Cardiac septum (tissue), 1 donor: ENCODE measurements at regions of chr20 and their contacts with region 1.

Region 1: GRCh38 chr20:49219089-49219923 is at the start of gene DDX27:
- DNase-seq: peak; percentile 99
- total RNA-seq, gene DDX27: 14.0 TPM

Region 2: DNA sequence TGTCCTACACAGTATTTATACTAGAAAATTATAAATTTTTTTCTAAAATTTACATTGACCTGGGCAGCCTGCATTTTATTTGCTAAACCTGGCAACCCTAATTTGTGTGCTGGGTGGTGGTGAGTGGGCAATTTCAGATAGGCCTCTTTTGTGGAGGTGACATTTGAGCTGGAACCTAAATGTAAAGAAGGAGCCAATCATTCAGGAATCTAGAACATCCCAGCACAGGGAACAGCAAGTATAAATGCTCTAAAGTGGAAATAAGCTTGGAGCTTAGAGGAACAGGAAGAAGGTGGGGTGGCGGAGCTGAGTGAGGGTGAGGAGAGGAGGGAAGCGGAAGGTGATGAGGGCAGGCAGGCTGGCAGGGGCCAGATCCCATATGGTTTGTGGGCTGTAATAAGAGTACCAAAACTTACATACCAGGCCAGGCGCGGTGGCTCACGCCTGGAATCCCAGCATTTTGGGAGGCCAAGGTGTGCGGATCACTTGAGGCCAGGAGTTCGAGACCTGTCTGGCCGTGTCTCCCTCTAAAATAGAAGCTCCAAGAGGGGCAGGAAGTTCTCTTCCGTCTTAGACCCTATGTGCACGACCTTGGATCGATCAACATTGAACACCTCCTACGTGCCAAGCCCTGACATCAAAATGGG is 173.7 kb before region 1 on chr20:
- intact Hi-C with region 1: no loop called
- DNase-seq: peak; percentile 85

Region 3: DNA sequence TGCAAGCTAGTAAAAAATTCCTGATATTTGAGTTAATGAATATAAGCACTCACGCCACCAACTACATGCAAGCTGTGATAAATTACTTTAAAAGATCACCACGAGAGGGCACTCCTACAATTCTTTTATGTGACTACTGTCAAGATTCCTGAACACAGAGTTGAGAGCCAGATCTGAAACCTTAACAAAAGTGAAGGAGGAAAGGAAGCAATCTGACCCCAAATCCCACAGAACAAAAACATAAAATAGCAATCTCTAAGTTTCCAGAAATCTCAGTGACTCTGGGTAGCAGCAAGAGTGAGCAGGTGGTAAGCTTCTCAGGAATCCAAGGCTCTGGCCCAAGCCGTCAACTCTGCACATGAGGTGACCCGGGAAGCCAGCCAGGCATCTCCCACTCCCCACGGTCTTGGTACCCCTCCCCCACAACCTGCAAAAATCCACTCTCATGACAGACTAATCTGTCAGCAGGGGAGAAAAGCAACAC is 86.3 kb before region 1 on chr20:
- intact Hi-C with region 1: loop called (anchors 2 kb)
- DNase-seq: no peak

Region 4: DNA sequence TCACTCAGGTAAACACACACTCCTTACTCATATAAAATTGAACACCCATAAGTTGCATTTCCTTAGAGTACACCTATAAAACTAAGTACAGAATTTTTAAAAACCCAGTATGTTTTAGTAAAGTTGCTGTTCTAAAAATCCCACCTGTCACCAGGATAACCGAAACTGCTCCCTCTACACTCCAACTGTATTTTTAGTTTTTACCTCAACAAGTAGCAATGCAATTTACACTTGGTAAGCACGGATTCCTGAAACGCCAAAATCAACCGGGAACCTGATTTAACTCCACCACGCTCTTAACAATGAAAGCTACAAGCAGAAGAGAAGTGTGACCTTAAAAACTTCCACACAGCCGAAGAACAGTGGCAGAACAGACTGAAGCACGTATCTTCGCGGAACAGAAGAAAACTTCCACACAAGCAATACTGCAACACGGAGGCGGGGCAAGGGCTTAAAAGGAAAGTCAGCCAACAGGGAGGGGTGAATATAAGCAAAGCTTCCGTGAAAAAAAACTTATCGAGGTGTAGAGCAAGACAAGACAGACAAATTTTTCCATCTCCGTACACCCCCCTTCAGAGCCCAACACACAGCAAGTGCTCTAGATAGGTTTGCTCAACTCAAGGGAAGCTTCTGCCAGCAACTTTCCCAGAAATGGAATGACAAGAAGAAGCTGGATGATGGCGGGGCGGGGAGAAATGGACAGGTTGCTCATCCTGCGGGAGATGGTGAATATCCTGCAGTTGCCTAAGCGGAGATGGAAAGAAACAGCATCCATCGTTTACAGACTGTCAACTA is 32.6 kb before region 1 on chr20:
- intact Hi-C with region 1: loop called (anchors 1 kb)
- DNase-seq: peak; percentile 84

Region 5: DNA sequence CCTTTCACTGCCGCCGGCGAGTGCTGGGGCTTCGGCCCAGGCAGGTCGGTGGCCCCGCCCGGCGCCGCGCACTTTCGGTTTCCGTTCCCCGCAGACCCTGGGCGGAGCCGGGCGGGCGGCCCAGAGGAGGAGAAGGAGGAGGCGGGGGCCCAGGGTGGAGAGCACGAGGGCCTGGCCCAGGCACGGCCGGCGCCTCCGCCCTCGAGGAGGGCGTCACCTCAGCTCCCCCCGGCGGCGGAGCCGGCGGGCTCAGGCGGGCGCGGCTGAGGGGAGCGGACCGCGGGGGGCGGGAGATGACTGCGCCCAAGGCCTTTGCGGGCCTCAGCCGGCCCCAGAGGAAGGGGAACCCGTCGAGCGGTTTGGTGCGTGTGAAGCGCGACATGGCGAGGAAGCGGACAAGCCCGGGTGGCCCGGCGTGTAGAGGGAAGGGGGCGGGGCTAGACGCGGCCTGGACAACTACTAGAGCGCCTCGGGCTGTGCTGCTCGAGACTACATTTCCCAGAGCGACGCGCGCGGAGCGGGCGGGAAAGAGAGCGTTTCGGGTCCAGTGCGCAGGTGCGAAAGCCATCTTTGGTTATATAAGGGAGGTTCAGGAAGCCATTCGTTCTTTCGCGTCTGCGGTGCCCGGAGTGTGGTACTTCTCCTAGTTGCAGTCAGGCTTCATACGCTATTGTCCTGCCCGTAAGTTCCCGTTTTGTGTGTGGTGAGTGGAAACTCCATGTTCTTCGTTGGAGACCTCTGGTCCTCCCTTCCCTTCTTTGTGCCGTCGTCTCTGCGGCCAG is 58.9 kb after region 1 on chr20 and contains the start of gene ZNFX1:
- intact Hi-C with region 1: loop called (anchors 2 kb)
- DNase-seq: peak; percentile 99
- total RNA-seq, gene ZNFX1: 24.0 TPM

Region 6: GRCh38 chr20:49349694-49350093 is 130.4 kb after region 1 on chr20:
- intact Hi-C with region 1: no loop called
- DNase-seq: no peak